ENCODE measurements at regions of chr2 and their contacts with region 1.

Region 1: DNA sequence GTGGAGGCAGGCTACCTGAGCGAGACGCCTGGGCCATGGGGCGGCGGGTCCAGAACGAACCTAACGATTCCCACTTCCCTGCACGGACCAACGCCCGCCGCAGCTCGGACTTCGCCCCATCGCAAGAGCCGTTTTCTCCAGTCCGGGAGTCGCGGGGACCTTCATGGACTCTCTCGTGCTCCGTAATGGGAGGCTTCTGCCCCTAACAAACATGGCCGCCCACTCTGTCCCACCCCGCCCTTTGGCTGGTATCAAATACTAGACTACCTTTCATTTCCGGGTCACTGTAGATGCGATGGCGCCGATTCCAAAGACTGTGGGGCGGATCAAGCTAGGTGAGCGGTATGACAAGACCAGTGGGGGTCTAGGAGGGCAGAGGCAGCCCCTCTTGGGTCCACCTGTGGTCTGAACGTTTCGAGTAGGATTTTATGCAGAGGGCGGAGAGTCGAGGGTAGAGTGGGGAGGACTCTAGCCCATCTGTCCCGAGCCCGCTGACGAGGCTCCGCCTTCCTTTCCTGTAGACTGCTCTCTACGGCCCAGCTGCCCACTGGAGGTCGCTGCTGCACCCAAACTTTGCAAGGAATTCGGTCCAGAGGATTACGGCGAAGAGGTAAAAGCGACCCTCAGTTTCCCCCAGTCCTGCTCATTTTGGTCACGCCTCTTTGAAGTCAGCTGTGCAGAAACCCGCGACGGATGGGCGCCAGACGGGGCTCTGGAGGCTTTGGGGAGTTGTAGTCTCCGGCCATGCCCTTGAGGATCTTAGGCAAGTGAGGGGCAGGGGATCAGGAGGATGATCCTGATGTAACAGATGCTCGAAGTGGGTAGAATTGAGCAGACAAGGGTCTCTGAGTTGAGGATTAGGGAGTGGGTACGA is at the starts of genes CCDC142 and TTC31:
- DNase-seq: peak; percentile 91 to 97 (median 94)
- H3K4me3 ChIP-seq: peak within 1 kb of the TSS; percentile 68 to 100 (median 90)
- H3K27ac ChIP-seq: peak within 1 kb of the TSS; percentile 65 to 98 (median 92)
- H3K27me3 ChIP-seq: no peaks in the 10 kb centered on the region
- CTCF ChIP-seq: peak; percentile 68 to 96 (median 86)
- total RNA-seq, gene CCDC142: 8.0 to 35.4 (median 19.6) TPM
- total RNA-seq, gene TTC31: 7.8 to 28.4 (median 15.7) TPM

Region 2: DNA sequence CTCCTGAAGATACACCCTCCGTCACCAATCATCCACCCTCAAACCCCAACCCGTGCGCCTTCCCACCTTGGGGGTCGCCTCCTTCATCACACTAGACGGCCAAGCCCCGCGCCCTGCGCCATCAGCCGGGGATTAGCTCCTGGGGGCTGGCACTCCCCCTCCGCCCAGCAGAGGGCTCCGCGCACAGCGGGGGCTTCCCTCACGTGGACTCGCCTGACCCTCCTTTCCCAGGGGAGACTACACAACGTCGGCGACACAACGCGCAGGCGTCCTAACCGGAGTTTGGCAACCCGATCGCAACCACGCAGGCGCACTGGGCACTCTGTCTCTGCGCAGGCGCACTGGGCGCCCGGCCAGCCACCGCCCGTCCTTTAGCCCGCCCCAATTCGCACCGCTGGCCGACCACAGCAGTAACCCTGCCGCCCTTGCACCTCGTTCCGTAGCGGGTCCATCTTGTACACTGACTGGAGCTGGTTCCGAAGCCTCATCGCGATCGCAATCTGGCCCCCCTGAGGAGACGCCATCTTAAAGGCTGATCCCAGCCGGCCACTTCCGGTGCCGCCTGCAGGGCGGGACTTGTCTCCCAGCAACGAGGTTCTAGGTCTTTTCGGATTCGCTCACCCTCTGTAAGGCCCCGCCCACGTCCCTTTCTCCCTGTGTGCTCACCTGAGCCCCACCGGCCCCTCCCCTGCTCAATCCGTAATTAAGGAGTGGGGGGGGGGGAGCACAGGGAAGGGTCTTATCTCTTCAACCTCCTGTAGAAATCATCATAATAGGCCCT is 24.3 kb after region 1 on chr2 and contains the start of gene PCGF1:
- intact Hi-C with region 1: loop called in 1 of 2 experiments (anchors 1 kb)
- DNase-seq: peak; percentile 91 to 99 (median 98)
- H3K4me3 ChIP-seq: peak within 1 kb of the TSS; percentile 56 to 98 (median 86)
- H3K27ac ChIP-seq: peak within 1 kb of the TSS; percentile 91 to 100 (median 99)
- H3K27me3 ChIP-seq: peaks cover 0 to 57% (median 39%) of the 10 kb centered on the region in 45 donors
- CTCF ChIP-seq: peak in 45 of 56 donors; percentile 6 to 59 (median 37)
- total RNA-seq, gene PCGF1: 12.1 to 39.8 (median 22.4) TPM

Region 3: GRCh38 chr2:74587664-74588277 is 104.7 kb after region 1 on chr2:
- intact Hi-C with region 1: loop called (anchors 2 to 5 kb)
- DNase-seq: peak in 7 of 10 donors; percentile 27 to 62 (median 48)
- H3K4me3 ChIP-seq: no peak overlapping the region
- H3K27ac ChIP-seq: no peak overlapping the region
- H3K27me3 ChIP-seq: peaks cover 0 to 18% (median under 1%) of the 10 kb centered on the region in 45 donors
- CTCF ChIP-seq: peak in 55 of 56 donors; percentile 7 to 84 (median 68)

Region 4: GRCh38 chr2:74675090-74675489 is 192.1 kb after region 1 on chr2:
- intact Hi-C with region 1: no loop called
- DNase-seq: no peak
- H3K4me3 ChIP-seq: no peak overlapping the region
- H3K27ac ChIP-seq: no peak overlapping the region
- H3K27me3 ChIP-seq: no peaks in the 10 kb centered on the region
- CTCF ChIP-seq: peak in 3 of 56 donors; percentile 9 to 24 (median 11)

Measured in dorsolateral prefrontal cortex (tissue), 120 donors.